GM12878 (cell line): ENCODE measurements at regions of chr2 and their contacts with region 1.

Region 1: DNA sequence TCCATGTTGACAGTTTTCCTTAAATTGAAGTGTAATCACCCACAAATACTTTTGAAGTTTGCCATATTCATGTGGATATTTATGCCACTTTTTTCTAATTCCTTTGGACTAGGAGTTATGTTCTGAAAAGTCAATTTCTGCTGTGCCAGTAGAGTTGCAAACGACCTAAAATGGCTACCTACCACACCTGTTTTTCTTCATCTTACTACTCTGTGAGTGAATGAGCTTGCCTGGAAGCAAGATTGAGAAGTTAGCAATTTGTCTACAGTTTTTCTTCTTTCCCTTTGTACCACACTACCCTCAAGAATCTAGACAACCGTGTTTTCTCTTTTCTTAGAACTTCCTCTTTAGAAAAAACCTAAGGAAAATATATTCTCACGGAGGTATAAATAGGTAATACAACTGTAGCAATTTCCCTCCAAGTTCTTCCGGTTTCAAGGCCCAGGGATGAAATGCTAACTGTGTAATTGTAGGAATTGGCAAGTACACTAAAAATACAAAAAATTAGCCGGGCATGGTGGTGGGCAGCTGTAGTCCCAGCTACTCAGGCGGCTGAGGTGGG is 7.3 kb upstream of the SLC39A10 start:
- DNase-seq: no peak
- ATAC-seq: peak; percentile 47
- H3K4me3 ChIP-seq: peak overlapping the region; percentile 17; the same call in 1 of the 2 replicates
- H3K27ac ChIP-seq: peak overlapping the region; percentile 80
- H3K4me1 ChIP-seq: peaks cover 20% of the 10 kb centered on the region
- H3K27me3 ChIP-seq: no peaks in the 10 kb centered on the region
- CTCF ChIP-seq: no peak
- EP300 ChIP-seq: no peak; a peak in 1 of 4 replicates
- POLR2A ChIP-seq: no peak
- RAD21 ChIP-seq: no peak

Region 2: GRCh38 chr2:195626507-195626906 is 23.2 kb before region 1 on chr2:
- CTCF ChIA-PET with region 1: no interaction called
- POLR2A ChIA-PET with region 1: interaction called, 5 read pairs
- RAD21 ChIA-PET with region 1: interaction called, 3 read pairs
- SMC1A ChIA-PET with region 1: interaction called, 11 read pairs
- in situ Hi-C with region 1: no loop called
- intact Hi-C with region 1: no loop called
- DNase-seq: no peak
- ATAC-seq: no peak
- H3K4me3 ChIP-seq: no peak overlapping the region
- H3K27ac ChIP-seq: no peak overlapping the region
- H3K4me1 ChIP-seq: no peaks in the 10 kb centered on the region
- H3K27me3 ChIP-seq: no peaks in the 10 kb centered on the region
- CTCF ChIP-seq: no peak
- EP300 ChIP-seq: no peak
- POLR2A ChIP-seq: no peak
- RAD21 ChIP-seq: no peak

Region 3: DNA sequence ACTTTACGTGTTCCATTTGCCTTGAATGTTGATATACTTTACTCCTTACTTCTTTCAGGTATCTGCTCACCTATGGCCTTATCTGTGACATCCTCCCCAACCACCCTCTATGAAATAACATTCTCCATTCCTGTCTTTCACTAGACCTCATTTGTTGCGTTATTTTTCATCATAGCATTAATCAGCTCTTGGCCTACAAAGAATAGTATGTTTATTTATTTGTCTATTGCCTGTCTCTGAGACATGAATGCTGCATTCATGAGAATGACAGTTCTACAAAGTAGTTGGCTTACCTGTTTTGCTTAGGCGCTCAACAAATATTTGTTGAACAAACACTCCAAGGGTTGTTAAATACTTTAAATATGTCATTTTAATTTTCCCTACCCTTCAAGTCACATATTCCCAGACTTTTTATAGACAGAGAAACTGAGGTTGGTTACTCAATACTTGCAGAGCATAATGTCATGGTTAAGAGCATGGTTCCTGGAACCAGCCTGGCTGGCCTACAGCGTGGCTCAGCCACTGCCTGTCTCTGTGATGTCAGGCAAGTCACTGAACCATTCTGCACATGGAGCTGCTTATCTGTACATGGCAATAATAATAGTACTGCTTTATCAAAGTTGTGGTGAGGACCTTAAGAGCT is 641.6 kb after region 1 on chr2:
- CTCF ChIA-PET with region 1: no interaction called
- POLR2A ChIA-PET with region 1: no interaction called
- RAD21 ChIA-PET with region 1: no interaction called
- SMC1A ChIA-PET with region 1: no interaction called
- in situ Hi-C with region 1: no loop called
- intact Hi-C with region 1: no loop called
- DNase-seq: no peak
- ATAC-seq: no peak
- H3K4me3 ChIP-seq: no peak overlapping the region
- H3K27ac ChIP-seq: no peak overlapping the region
- H3K4me1 ChIP-seq: peaks cover 36% of the 10 kb centered on the region
- H3K27me3 ChIP-seq: no peaks in the 10 kb centered on the region
- CTCF ChIP-seq: no peak
- EP300 ChIP-seq: no peak
- POLR2A ChIP-seq: no peak
- RAD21 ChIP-seq: no peak